Esophagus muscularis mucosa (tissue), 4 donors: ENCODE measurements at regions of chr12 and their contacts with region 1.

Region 1: GRCh38 chr12:6335451-6336078 is 6.3 kb downstream of the TNFRSF1A start:
- DNase-seq: peak; percentile 95
- H3K4me3 ChIP-seq: peak overlapping the region; percentile 61 to 92 (median 84)
- H3K27ac ChIP-seq: peak overlapping the region; percentile 93 to 99 (median 97)
- H3K4me1 ChIP-seq: peaks cover 68 to 98% (median 96%) of the 10 kb centered on the region in 4 donors
- H3K27me3 ChIP-seq: no peaks in the 10 kb centered on the region
- CTCF ChIP-seq: peak; percentile 48 to 65 (median 56)
- EP300 ChIP-seq: peak; percentile 3
- POLR2A ChIP-seq: no peak

Region 2: DNA sequence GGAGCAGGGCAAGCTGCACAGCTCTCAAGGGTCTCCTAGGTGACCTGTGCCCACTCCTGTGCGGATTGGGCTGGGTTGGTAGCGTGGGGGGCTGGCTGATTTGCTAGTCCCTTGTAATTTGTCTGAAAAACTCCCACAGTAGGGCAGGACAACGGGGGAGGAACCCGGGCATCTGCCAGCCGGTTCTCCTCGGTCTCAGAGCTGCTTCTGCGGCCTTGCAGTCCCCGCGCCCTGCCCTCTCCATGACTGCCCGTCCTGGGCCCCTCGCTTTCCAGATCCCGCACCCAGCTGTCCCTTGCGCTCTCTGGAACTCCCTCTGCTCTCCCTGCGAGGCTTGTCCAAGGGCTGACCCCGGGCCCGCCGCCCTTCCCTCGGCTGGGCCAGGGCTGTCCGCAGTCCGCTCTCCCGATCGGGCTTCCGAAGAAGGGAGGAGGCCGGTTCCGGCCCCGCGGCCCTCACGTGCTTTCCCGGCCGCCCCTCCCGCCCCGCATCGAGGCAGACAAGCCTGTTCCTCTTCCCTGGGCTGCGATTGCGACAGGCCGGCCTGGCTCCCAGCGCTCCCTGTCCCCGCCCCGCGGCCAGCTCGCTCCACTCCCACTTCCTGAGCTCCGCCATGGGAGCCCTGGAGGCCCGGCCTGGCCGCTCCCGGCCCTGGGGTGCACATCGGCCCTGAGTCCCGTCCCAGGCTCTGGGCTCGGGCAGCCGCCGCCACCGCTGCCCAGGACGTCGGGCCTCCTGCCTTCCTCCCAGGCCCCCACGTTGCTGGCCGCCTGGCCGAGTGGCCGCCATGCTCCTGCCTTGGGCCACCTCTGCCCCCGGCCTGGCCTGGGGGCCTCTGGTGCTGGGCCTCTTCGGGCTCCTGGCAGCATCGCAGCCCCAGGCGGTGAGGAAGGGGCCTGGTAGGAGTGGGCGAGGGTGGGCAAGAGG is 48.3 kb after region 1 on chr12 and contains the start of gene LTBR:
- intact Hi-C with region 1: loop called (anchors 5 kb)
- DNase-seq: peak; percentile 98
- H3K4me3 ChIP-seq: peak within 1 kb of the TSS; percentile 67 to 93 (median 86)
- H3K27ac ChIP-seq: peak within 1 kb of the TSS; percentile 96 to 98 (median 98)
- H3K4me1 ChIP-seq: peaks cover 28 to 86% (median 74%) of the 10 kb centered on the region in 4 donors
- H3K27me3 ChIP-seq: no peaks in the 10 kb centered on the region
- CTCF ChIP-seq: peak in 2 of 3 experiments; percentile 2 to 25
- EP300 ChIP-seq: no peak
- POLR2A ChIP-seq: peak; percentile 76
- total RNA-seq, gene LTBR: 117 to 144 (median 137) TPM